IMR-90 (cell line): ENCODE measurements at regions of chr10 and their contacts with region 1.

Region 1: DNA sequence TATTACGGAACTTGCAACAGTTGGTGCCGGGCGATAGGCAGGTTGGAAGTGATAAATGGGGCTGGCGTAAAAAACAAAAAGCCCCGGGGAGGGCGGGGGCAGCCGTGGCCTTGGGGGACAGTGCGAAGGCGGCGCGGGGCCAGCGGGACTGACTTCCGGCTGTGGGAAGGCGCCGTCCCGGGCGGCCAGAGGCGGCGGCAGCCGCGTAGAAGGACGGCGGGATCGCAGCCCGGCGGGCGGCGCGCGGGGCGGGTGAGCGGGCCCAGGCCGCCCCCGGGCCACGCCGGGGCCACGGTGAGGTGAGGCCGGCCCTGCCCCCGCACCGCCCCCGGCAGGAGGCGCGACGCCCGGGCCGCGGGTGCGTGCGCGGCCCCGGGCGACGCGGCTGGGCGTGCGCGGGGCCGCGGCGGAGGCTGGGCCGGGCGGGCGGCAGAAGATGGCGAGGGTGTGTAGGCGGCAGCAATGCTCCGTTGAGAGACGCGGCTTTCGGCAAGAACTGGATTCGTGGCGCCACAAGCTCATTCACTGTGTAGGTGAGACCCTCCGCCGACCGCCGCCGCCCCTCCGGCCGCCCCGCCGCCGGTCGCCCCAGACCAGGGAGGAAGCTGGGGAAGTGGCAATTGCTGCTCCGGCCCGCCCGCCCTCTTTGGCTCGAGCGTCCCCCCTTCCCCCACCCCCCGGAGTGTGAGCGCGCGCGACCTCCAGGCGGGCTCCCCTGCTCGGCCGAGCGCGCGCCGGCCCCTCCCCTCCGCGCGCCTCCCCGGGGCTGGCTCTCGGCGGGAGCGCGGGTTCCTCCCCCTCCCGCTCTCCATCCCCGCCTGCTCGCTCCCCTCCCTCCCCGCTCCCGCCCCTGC is at the start of gene LCOR:
- DNase-seq: peak; percentile 86
- ATAC-seq: peak; percentile 84
- H3K4me3 ChIP-seq: peak within 1 kb of the TSS; percentile 97
- H3K27ac ChIP-seq: peak within 1 kb of the TSS; percentile 100
- H3K4me1 ChIP-seq: peaks cover 6% of the 10 kb centered on the region; the same call in 1 of the 2 replicates
- H3K27me3 ChIP-seq: no peaks in the 10 kb centered on the region
- CTCF ChIP-seq: no peak
- POLR2A ChIP-seq: peak; percentile 67
- RAD21 ChIP-seq: no peak
- total RNA-seq, gene LCOR: 25.8 and 36.9 TPM in 2 replicates

Region 2: GRCh38 chr10:96374985-96375830 is 456.9 kb before region 1 on chr10:
- CTCF ChIA-PET with region 1: no interaction called
- POLR2A ChIA-PET with region 1: no interaction called
- dilution Hi-C with region 1: no loop called
- in situ Hi-C with region 1: no loop called
- intact Hi-C with region 1: loop called (anchors 5 kb)
- DNase-seq: peak; percentile 77
- ATAC-seq: peak; percentile 99
- H3K4me3 ChIP-seq: peak overlapping the region; percentile 36
- H3K27ac ChIP-seq: no peak overlapping the region
- H3K4me1 ChIP-seq: no peaks in the 10 kb centered on the region
- H3K27me3 ChIP-seq: peaks cover 14% of the 10 kb centered on the region
- CTCF ChIP-seq: peak; percentile 99
- POLR2A ChIP-seq: no peak
- RAD21 ChIP-seq: peak; percentile 88

Region 3: GRCh38 chr10:96513698-96514561 is 318.2 kb before region 1 on chr10 and contains the start of gene TLL2:
- CTCF ChIA-PET with region 1: no interaction called
- POLR2A ChIA-PET with region 1: no interaction called
- dilution Hi-C with region 1: no loop called
- in situ Hi-C with region 1: no loop called
- intact Hi-C with region 1: loop called (anchors 5 kb)
- DNase-seq: peak; percentile 84
- ATAC-seq: peak; percentile 95
- H3K4me3 ChIP-seq: peak within 1 kb of the TSS; percentile 32
- H3K27ac ChIP-seq: no peak within 1 kb of the TSS
- H3K4me1 ChIP-seq: no peaks in the 10 kb centered on the region; the same call in 1 of the 2 replicates
- H3K27me3 ChIP-seq: peaks cover 21% of the 10 kb centered on the region
- CTCF ChIP-seq: peak; percentile 58
- POLR2A ChIP-seq: no peak
- RAD21 ChIP-seq: peak; percentile 34; the same call in 1 of the 2 replicates
- total RNA-seq, gene TLL2: under 0.01 TPM in 2 replicates

Region 4: GRCh38 chr10:96642973-96643372 is 189.1 kb before region 1 on chr10:
- CTCF ChIA-PET with region 1: no interaction called
- POLR2A ChIA-PET with region 1: no interaction called
- dilution Hi-C with region 1: no loop called
- in situ Hi-C with region 1: no loop called
- intact Hi-C with region 1: loop called (anchors 1 kb)
- DNase-seq: peak; percentile 31
- ATAC-seq: no peak
- H3K4me3 ChIP-seq: no peak overlapping the region
- H3K27ac ChIP-seq: no peak overlapping the region
- H3K4me1 ChIP-seq: no peaks in the 10 kb centered on the region
- H3K27me3 ChIP-seq: peaks cover 33% of the 10 kb centered on the region
- CTCF ChIP-seq: peak; percentile 66
- POLR2A ChIP-seq: no peak
- RAD21 ChIP-seq: peak; percentile 68

Region 5: GRCh38 chr10:96991313-96991841 is 159.3 kb after region 1 on chr10:
- CTCF ChIA-PET with region 1: no interaction called
- POLR2A ChIA-PET with region 1: no interaction called
- dilution Hi-C with region 1: no loop called
- in situ Hi-C with region 1: no loop called
- intact Hi-C with region 1: loop called (anchors 2 kb)
- DNase-seq: peak; percentile 90
- ATAC-seq: peak; percentile 90
- H3K4me3 ChIP-seq: peak overlapping the region; percentile 11; the same call in 1 of the 2 replicates
- H3K27ac ChIP-seq: peak overlapping the region; percentile 77
- H3K4me1 ChIP-seq: peaks cover 14% of the 10 kb centered on the region
- H3K27me3 ChIP-seq: no peaks in the 10 kb centered on the region
- CTCF ChIP-seq: no peak
- POLR2A ChIP-seq: no peak
- RAD21 ChIP-seq: no peak

Region 6: DNA sequence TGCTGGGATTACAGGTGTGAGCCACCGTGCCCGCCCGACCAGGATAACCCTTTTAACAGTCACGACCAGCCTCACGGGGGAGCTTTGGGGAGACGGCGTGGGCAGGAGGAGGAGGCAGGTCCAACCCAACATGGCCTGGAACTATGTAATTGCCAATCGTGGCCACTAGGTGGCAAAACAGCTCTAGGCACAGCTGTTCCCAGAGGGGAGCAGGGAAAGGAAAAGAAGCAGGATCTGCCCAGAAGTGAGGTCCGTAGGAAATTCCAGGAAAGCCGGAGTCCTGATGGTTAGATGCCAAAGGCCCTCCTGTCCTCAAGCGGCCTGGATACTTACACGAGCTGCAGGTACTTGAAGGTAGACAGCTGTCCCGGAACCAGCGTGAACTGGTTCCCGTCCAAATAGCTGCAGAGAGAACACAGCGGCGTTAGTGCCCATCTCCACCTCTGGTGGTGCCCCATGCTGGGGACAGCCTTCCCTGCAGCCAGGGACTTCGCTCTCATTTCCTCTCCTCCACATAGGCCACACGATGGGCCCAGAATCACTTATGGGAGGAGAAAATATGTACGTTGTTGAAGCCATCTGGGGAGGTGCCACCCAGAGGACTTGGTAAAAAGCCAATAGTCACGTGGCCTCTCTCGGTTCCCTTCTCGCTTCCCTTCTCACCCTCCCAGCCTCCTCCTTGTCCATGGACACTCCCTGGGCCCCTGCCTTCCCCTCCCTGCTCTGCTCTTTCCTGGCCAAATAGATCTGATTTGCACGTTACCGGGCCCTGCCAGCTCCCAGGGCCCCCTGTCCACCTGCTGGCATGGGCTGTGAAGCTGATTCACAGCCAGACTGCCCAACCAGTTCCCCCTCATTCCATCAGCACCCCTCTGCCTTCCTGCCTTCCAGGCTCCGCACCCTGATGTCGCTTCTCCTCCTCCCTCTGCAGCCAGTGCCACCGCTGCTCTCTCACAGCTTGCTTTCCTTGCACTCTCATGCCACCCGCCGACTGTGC is 205.6 kb after region 1 on chr10:
- CTCF ChIA-PET with region 1: no interaction called
- POLR2A ChIA-PET with region 1: interaction called, 10 read pairs
- dilution Hi-C with region 1: no loop called
- in situ Hi-C with region 1: no loop called
- intact Hi-C with region 1: no loop called
- DNase-seq: peak; percentile 71
- ATAC-seq: peak; percentile 98
- H3K4me3 ChIP-seq: peak overlapping the region; percentile 42
- H3K27ac ChIP-seq: no peak overlapping the region
- H3K4me1 ChIP-seq: peaks cover 5% of the 10 kb centered on the region; the same call in 1 of the 2 replicates
- H3K27me3 ChIP-seq: peaks cover 34% of the 10 kb centered on the region
- CTCF ChIP-seq: peak; percentile 83
- POLR2A ChIP-seq: no peak
- RAD21 ChIP-seq: peak; percentile 70